ENCODE measurements at regions of chrX and their contacts with region 1.

Region 1: GRCh38 chrX:154013614-154014360 is 5.9 kb downstream of the IRAK1 start:
- DNase-seq: peak; percentile 61
- H3K4me3 Mint-ChIP-seq: no peak overlapping the region
- H3K27ac Mint-ChIP-seq: peak overlapping the region; percentile 54
- H3K4me1 Mint-ChIP-seq: peaks cover 26% of the 10 kb centered on the region
- H3K27me3 Mint-ChIP-seq: no peaks in the 10 kb centered on the region

Region 2: DNA sequence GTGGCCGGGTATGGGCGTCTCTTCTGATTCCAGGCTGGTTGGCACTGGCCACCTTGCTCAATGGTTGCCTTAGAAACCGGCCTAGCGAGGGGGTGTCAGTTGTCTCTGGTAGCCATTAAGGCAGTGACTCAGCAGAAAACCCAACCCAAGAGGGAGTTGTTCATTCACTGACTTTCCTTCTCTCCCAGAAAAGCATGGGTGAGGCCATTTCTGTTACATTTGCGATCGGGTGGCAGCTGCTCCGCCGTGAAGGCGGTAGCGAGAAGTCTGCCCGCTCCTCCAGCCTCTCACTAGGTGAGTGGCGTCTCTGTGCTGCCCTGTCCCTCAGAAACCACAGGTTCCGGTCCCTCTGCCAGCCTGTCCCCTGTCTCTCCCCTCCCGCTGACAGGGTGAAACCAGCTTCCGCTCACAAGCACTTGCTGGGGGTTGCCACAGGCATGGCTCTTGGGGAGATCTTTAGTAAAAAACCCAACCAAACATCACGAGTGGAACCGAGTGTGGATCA is 11.5 kb before region 1 on chrX:
- CTCF ChIA-PET with region 1: interaction called, 15 read pairs
- DNase-seq: peak; percentile 63
- H3K4me3 Mint-ChIP-seq: peak overlapping the region; percentile 44
- H3K27ac Mint-ChIP-seq: peak overlapping the region; percentile 87
- H3K4me1 Mint-ChIP-seq: peaks cover 22% of the 10 kb centered on the region
- H3K27me3 Mint-ChIP-seq: no peaks in the 10 kb centered on the region